T-cell (primary cell): ENCODE measurements at regions of chr2 and their contacts with region 1.

Region 1: GRCh38 chr2:42169100-42169873 is at the start of gene EML4:
- DNase-seq: peak; percentile 67 to 94 (median 83)
- ATAC-seq: peak; percentile 90 to 94 (median 92)
- H3K4me3 ChIP-seq: peak within 1 kb of the TSS; percentile 71 to 97
- H3K4me3 Mint-ChIP-seq: no peak within 1 kb of the TSS
- H3K27ac ChIP-seq: peak within 1 kb of the TSS; percentile 91
- H3K27ac Mint-ChIP-seq: peak within 1 kb of the TSS; percentile 61 to 82
- H3K4me1 ChIP-seq: peaks cover 16 to 34% of the 10 kb centered on the region in 2 experiments
- H3K4me1 Mint-ChIP-seq: peaks cover 9 to 15% (median 14%) of the 10 kb centered on the region in 3 donors
- H3K27me3 ChIP-seq: no peaks in the 10 kb centered on the region
- H3K27me3 Mint-ChIP-seq: no peaks in the 10 kb centered on the region
- total RNA-seq, gene EML4: 101 to 223 (median 123) TPM

Region 2: GRCh38 chr2:40646642-40647041 is 1522.6 kb before region 1 on chr2:
- CTCF ChIA-PET with region 1: no interaction called
- POLR2A ChIA-PET with region 1: no interaction called
- DNase-seq: no peak
- ATAC-seq: no peak
- H3K4me3 ChIP-seq: no peak overlapping the region
- H3K4me3 Mint-ChIP-seq: no peak overlapping the region
- H3K27ac ChIP-seq: no peak overlapping the region
- H3K27ac Mint-ChIP-seq: no peak overlapping the region
- H3K4me1 ChIP-seq: no peaks in the 10 kb centered on the region
- H3K4me1 Mint-ChIP-seq: no peaks in the 10 kb centered on the region
- H3K27me3 ChIP-seq: no peaks in the 10 kb centered on the region
- H3K27me3 Mint-ChIP-seq: no peaks in the 10 kb centered on the region

Region 3: DNA sequence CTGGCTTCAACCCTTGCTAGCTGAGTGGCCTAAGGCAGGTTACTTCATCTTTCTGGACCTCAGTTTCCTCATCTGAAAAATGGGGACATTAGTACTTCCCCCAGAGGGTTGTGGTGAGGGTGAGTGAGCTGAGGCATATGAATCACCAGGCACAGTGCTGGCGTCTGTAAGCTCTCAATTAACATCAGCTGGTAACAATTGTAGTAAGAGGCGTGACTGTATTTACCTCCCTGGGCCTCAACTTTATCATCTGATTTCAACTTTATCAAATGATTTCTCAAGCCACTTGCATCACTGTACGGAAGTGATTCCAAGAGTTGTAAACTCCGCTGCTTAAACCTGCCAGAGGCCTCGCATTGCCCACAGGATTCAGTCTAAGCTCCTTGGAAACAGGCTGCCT is 175.1 kb before region 1 on chr2:
- CTCF ChIA-PET with region 1: no interaction called
- POLR2A ChIA-PET with region 1: no interaction called
- DNase-seq: no peak
- ATAC-seq: no peak
- H3K4me3 ChIP-seq: no peak overlapping the region
- H3K4me3 Mint-ChIP-seq: no peak overlapping the region
- H3K27ac ChIP-seq: no peak overlapping the region
- H3K27ac Mint-ChIP-seq: no peak overlapping the region
- H3K4me1 ChIP-seq: no peaks in the 10 kb centered on the region
- H3K4me1 Mint-ChIP-seq: no peaks in the 10 kb centered on the region
- H3K27me3 ChIP-seq: peaks cover 0 to 13% of the 10 kb centered on the region in 2 experiments
- H3K27me3 Mint-ChIP-seq: peaks cover 17 to 21% of the 10 kb centered on the region in 2 donors

Region 4: DNA sequence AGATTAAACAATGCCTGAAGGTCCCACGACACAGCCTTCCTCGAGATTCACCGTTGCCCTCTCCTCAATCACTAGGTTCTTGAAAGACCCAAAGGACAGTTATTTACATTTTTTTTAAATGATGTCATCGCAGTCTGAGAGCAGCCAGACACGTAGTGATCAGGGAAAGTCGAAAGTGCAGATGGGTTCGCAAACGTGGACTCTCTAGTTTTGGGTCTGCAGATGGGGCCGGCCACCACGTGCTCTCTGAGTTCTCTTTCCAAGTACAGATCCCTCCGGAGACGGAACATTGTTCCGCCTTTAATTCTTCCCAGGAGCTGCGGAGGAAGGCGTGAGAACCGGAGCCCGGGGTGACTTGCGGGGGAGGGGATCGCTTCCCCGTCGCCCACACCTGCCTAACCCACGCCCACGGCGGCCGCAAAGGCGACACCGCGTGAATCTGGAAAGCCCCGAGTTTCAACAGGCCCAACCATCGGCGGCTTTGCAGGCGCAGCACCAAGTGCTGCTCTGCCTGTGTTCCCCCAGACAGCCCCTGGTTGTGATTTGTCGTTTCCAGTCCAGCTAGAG is 67.2 kb before region 1 on chr2:
- CTCF ChIA-PET with region 1: interaction called, 6 to 12 read pairs
- POLR2A ChIA-PET with region 1: interaction called, 5 to 20 read pairs
- DNase-seq: peak; percentile 79 to 98 (median 96)
- ATAC-seq: peak; percentile 68 to 81 (median 70)
- H3K4me3 ChIP-seq: peak overlapping the region in 1 of 2 donors; percentile 46
- H3K4me3 Mint-ChIP-seq: peak overlapping the region in 2 of 3 donors; percentile 83
- H3K27ac ChIP-seq: peak overlapping the region; percentile 99
- H3K27ac Mint-ChIP-seq: no peak overlapping the region
- H3K4me1 ChIP-seq: peaks cover 66 to 97% of the 10 kb centered on the region in 2 experiments
- H3K4me1 Mint-ChIP-seq: peaks cover 48% of the 10 kb centered on the region in 3 donors
- H3K27me3 ChIP-seq: no peaks in the 10 kb centered on the region
- H3K27me3 Mint-ChIP-seq: no peaks in the 10 kb centered on the region

Region 5: DNA sequence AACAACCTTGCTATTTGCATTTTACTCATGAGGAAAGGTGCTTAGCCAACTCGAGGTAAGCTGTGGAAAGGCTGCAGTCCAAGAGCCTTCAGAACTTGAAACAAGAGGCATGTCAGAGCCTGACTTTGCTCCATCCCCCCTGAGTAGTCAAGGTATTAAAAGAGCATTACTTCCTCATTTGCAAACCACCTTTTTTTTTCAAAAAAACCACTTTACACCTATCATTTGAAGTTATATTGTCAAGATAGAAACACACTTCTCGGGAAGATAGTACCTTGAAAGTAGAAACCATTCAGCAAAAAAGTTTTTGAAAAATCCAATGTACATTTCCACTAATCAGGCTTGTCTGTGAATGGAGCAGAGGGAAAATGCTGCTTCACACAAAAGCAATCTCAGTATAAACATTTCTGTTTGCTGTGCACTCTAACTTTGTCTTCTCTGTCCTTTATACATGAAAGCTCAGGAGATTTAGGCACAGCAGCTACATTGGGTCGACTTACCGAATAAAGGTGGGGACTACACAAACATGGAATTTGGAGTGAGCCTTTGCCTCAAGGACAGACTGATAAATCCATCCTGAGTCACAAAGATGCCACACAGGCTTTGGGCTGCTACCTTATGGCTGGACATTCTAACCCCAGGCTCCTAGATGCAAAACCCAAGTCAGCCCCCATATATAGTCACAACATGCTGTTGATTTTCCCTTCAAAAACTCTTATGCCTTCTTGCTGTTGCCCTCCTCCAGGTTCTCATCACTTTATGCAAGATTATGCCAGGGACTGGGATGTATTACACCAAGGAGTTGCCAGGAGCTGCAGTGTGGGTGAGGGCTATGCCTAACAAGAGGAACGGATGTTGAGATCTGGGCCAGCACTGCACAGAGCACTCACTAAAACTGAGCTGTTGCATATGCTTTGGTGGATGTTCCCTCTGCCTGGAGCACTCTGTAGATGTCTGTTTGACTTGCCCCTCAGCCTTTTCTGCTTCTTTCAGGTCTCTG is 41.6 kb before region 1 on chr2:
- CTCF ChIA-PET with region 1: interaction called, 5 to 13 read pairs
- POLR2A ChIA-PET with region 1: interaction called, 4 to 32 read pairs
- DNase-seq: peak in 24 of 35 experiments; percentile 8 to 67 (median 28)
- ATAC-seq: peak; percentile 52 to 59 (median 55)
- H3K4me3 ChIP-seq: no peak overlapping the region
- H3K4me3 Mint-ChIP-seq: peak overlapping the region; percentile 65 to 79 (median 70)
- H3K27ac ChIP-seq: peak overlapping the region; percentile 92
- H3K27ac Mint-ChIP-seq: peak overlapping the region; percentile 99
- H3K4me1 ChIP-seq: peaks cover 85 to 87% of the 10 kb centered on the region in 2 experiments
- H3K4me1 Mint-ChIP-seq: peaks cover 92 to 96% (median 95%) of the 10 kb centered on the region in 3 donors
- H3K27me3 ChIP-seq: no peaks in the 10 kb centered on the region
- H3K27me3 Mint-ChIP-seq: no peaks in the 10 kb centered on the region

Region 6: GRCh38 chr2:42132966-42133641 is 36.2 kb before region 1 on chr2:
- CTCF ChIA-PET with region 1: interaction called, 3 to 13 read pairs
- POLR2A ChIA-PET with region 1: interaction called, 5 to 32 read pairs
- DNase-seq: peak; percentile 74 to 95 (median 89)
- ATAC-seq: peak; percentile 88 to 92 (median 90)
- H3K4me3 ChIP-seq: peak overlapping the region; percentile 38 to 42
- H3K4me3 Mint-ChIP-seq: peak overlapping the region; percentile 66 to 74 (median 71)
- H3K27ac ChIP-seq: peak overlapping the region; percentile 99
- H3K27ac Mint-ChIP-seq: peak overlapping the region; percentile 99
- H3K4me1 ChIP-seq: peaks cover 72 to 91% of the 10 kb centered on the region in 2 experiments
- H3K4me1 Mint-ChIP-seq: peaks cover 90 to 98% (median 94%) of the 10 kb centered on the region in 3 donors
- H3K27me3 ChIP-seq: no peaks in the 10 kb centered on the region
- H3K27me3 Mint-ChIP-seq: no peaks in the 10 kb centered on the region

Region 7: DNA sequence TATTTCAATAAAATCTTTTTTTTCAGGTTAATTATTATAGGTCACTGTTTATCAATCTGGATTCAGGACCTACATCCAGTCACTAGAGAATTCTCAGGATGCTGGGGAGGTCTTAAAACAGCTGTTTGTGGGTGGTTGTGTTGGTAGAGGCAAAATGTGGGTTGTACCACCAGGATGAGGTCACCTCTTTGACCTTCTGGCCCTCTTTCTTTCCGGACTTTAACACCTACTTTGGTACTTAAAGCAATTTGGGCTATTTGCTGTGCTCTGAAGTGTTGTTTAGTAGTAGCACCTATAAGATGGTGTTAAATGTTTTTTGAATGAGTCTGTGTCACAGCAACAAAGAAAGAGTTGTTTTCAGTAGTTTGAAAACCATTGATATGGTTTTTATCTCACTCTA is 14.5 kb after region 1 on chr2:
- CTCF ChIA-PET with region 1: interaction called in 1 of 2 experiments, 16 read pairs
- POLR2A ChIA-PET with region 1: interaction called, 3 to 5 read pairs
- DNase-seq: no peak
- ATAC-seq: peak in 1 of 4 experiments; percentile 59
- H3K4me3 ChIP-seq: no peak overlapping the region
- H3K4me3 Mint-ChIP-seq: peak overlapping the region in 1 of 3 donors; percentile 2
- H3K27ac ChIP-seq: peak overlapping the region; percentile 43
- H3K27ac Mint-ChIP-seq: peak overlapping the region; percentile 28 to 59
- H3K4me1 ChIP-seq: peaks cover 9 to 28% of the 10 kb centered on the region in 2 experiments
- H3K4me1 Mint-ChIP-seq: peaks cover 78 to 90% (median 82%) of the 10 kb centered on the region in 3 donors
- H3K27me3 ChIP-seq: no peaks in the 10 kb centered on the region
- H3K27me3 Mint-ChIP-seq: no peaks in the 10 kb centered on the region

Region 8: GRCh38 chr2:42196403-42197267 is 27.3 kb after region 1 on chr2:
- CTCF ChIA-PET with region 1: interaction called, 3 to 10 read pairs
- POLR2A ChIA-PET with region 1: interaction called in 1 of 2 experiments, 30 read pairs
- DNase-seq: peak in 34 of 35 experiments; percentile 4 to 72 (median 36)
- ATAC-seq: peak; percentile 78 to 83 (median 82)
- H3K4me3 ChIP-seq: no peak overlapping the region
- H3K4me3 Mint-ChIP-seq: peak overlapping the region in 1 of 3 donors; percentile 41
- H3K27ac ChIP-seq: peak overlapping the region; percentile 1
- H3K27ac Mint-ChIP-seq: peak overlapping the region; percentile 35 to 65
- H3K4me1 ChIP-seq: peaks cover 24 to 40% of the 10 kb centered on the region in 2 experiments
- H3K4me1 Mint-ChIP-seq: peaks cover 85 to 87% (median 86%) of the 10 kb centered on the region in 3 donors
- H3K27me3 ChIP-seq: no peaks in the 10 kb centered on the region
- H3K27me3 Mint-ChIP-seq: no peaks in the 10 kb centered on the region